ENCODE measurements at regions of chr3 and their contacts with region 1.

Region 1: DNA sequence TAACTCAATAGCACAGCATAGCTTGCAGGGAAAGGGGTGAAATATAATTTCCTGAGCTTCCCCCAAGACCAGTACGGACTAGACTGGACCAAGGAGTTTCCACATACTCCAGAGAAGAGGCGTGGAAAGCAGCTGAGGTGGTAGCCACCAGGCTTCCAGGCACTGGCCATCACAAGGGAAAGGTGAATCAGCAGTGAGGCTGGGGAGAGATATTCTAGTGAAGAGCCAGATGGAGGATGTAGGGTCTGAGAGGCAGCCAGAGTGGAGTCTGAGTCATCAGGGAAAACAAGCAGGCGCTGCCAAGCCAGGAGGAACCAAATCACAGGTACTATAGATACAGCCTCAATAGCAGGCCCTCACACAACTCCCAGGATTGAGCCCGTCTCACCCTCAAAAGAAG is 9.6 kb upstream of the RASA2 start:
- DNase-seq: peak; percentile 96
- H3K4me3 Mint-ChIP-seq: no peak overlapping the region
- H3K27ac Mint-ChIP-seq: peak overlapping the region; percentile 58
- H3K4me1 Mint-ChIP-seq: peaks cover 22% of the 10 kb centered on the region
- H3K27me3 Mint-ChIP-seq: no peaks in the 10 kb centered on the region
- CTCF ChIP-seq: no peak

Region 2: GRCh38 chr3:141493184-141493583 is 16.0 kb after region 1 on chr3:
- CTCF ChIA-PET with region 1: no interaction called
- POLR2A ChIA-PET with region 1: no interaction called
- intact Hi-C with region 1: no loop called
- DNase-seq: no peak
- H3K4me3 Mint-ChIP-seq: no peak overlapping the region
- H3K27ac Mint-ChIP-seq: no peak overlapping the region
- H3K4me1 Mint-ChIP-seq: peaks cover 25% of the 10 kb centered on the region
- H3K27me3 Mint-ChIP-seq: no peaks in the 10 kb centered on the region
- CTCF ChIP-seq: no peak

Region 3: GRCh38 chr3:141561426-141562034 is 84.3 kb after region 1 on chr3:
- CTCF ChIA-PET with region 1: interaction called, 8 read pairs
- POLR2A ChIA-PET with region 1: no interaction called
- intact Hi-C with region 1: loop called (anchors 1 kb)
- DNase-seq: peak; percentile 64
- H3K4me3 Mint-ChIP-seq: no peak overlapping the region
- H3K27ac Mint-ChIP-seq: no peak overlapping the region
- H3K4me1 Mint-ChIP-seq: no peaks in the 10 kb centered on the region
- H3K27me3 Mint-ChIP-seq: no peaks in the 10 kb centered on the region
- CTCF ChIP-seq: peak; percentile 88